ENCODE measurements at regions of chr3 and their contacts with region 1.

Region 1: DNA sequence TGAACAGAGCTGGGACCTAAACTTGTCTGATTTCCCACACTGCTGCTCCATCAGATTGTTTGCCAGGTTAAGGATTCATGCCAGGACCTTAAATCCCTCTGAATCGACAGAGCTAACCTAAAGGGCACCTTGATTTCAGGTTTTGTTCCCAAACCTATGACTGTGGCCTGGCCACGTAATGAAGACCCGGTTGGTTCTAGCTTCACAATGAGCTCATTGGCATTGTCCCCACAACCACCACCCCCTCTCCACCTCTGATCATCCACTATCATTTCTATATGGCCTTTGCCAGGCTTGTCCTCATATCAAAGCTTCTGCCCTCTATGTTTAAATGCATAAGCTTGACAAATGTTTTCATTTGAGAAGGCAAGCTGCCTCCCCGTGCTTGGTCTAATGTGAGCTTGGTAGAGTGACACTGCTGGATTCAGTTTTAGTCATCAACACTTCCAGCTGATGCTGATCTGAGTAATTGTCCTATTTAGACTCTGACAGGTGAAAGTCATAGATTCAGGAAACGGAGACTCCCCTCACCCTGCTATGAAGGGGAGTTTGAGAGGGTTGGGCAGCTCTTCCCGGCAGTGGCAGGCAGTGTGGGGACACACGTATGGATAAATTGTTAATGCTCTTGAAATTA is 407.1 kb upstream of the CFAP20DC start:
- DNase-seq: peak; percentile 70
- ATAC-seq: peak; percentile 96
- H3K4me3 Mint-ChIP-seq: no peak overlapping the region
- H3K27ac Mint-ChIP-seq: no peak overlapping the region
- H3K4me1 Mint-ChIP-seq: peaks cover 40% of the 10 kb centered on the region
- H3K27me3 Mint-ChIP-seq: no peaks in the 10 kb centered on the region

Region 2: GRCh38 chr3:59469948-59470723 is 13.2 kb after region 1 on chr3:
- CTCF ChIA-PET with region 1: interaction called, 4 read pairs
- POLR2A ChIA-PET with region 1: no interaction called
- intact Hi-C with region 1: loop called in 1 of 2 experiments (anchors 1 kb)
- DNase-seq: peak; percentile 59
- ATAC-seq: peak; percentile 86
- H3K4me3 Mint-ChIP-seq: no peak overlapping the region
- H3K27ac Mint-ChIP-seq: peak overlapping the region; percentile 59
- H3K4me1 Mint-ChIP-seq: peaks cover 28% of the 10 kb centered on the region
- H3K27me3 Mint-ChIP-seq: peaks cover 2% of the 10 kb centered on the region

Measured in activated CD4-positive, alpha-beta T cell treated with anti-CD3 and anti-CD28 coated beads for 36 hours (primary cell).